ENCODE measurements at regions of chr11 and their contacts with region 1.

Region 1: DNA sequence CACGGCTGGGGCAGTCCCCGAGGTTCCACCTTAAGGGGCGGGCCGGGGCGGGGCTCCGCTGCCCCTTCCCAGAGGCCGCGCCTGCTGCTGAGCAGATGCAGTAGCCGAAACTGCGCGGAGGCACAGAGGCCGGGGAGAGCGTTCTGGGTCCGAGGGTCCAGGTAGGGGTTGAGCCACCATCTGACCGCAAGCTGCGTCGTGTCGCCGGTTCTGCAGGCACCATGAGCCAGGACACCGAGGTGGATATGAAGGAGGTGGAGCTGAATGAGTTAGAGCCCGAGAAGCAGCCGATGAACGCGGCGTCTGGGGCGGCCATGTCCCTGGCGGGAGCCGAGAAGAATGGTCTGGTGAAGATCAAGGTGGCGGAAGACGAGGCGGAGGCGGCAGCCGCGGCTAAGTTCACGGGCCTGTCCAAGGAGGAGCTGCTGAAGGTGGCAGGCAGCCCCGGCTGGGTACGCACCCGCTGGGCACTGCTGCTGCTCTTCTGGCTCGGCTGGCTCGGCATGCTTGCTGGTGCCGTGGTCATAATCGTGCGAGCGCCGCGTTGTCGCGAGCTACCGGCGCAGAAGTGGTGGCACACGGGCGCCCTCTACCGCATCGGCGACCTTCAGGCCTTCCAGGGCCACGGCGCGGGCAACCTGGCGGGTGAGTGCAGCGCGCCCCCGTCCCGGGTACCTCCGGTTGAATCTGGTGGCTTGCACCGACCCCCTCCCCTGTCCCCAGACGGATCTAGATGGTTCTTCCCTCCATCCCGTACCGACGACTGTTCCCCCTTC is at the start of gene SLC3A2:
- DNase-seq: peak; percentile 92
- H3K4me3 Mint-ChIP-seq: peak within 1 kb of the TSS; percentile 99
- H3K27ac Mint-ChIP-seq: peak within 1 kb of the TSS; percentile 100
- H3K4me1 Mint-ChIP-seq: peaks cover 46% of the 10 kb centered on the region
- H3K27me3 Mint-ChIP-seq: no peaks in the 10 kb centered on the region
- total RNA-seq, gene SLC3A2: 309 to 314 TPM

Region 2: GRCh38 chr11:62621567-62622470 is 259.2 kb before region 1 on chr11 and contains the start of gene B3GAT3:
- CTCF ChIA-PET with region 1: no interaction called
- POLR2A ChIA-PET with region 1: no interaction called
- intact Hi-C with region 1: loop called (anchors 2 kb)
- DNase-seq: peak; percentile 98
- H3K4me3 Mint-ChIP-seq: peak within 1 kb of the TSS; percentile 97
- H3K27ac Mint-ChIP-seq: peak within 1 kb of the TSS; percentile 96
- H3K4me1 Mint-ChIP-seq: peaks cover 22% of the 10 kb centered on the region
- H3K27me3 Mint-ChIP-seq: no peaks in the 10 kb centered on the region
- total RNA-seq, gene B3GAT3: 67.0 to 70.4 TPM

Region 3: DNA sequence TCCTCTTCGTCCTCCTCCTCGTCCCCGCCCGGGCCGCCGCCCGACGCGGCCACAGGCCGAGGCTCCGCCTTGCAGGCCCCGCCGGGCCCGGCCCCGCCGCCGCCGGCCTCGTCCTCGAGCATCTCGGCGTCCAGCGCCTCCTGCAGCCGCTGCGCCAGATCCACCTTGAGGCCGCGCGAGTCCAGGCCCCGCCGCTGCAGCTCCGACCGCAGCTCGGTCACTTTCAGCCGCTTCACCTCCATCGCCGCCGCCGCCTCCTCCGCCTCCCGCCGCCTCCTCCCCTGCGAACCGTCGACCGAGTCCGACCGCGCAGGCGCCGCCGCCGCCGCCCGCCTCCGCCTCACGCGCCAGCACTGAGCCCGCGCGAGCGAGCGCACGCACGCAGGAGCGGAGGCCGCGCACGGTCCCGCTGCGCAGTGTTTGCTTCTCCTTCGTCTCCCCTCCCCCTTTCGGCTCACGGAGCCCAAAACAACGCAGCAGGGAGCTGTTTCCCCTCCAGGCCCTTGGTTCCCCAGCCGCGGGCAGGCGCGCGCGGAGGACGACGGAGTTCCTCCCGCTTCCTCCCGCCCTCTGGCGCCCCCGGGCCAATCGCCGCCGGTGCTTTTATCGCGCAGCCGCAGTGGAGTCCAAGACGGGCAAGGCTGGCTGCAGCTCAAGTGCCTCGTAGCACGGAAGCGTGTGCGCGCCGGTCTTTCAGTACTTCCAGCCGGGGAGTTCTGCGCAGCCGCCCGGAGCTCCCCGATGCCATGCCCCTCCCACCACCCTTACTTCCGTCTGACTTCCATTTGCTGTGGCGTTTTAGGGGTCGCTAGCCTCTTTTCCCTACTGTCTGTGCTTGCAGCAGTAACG is 153.9 kb before region 1 on chr11 and contains the start of gene HNRNPUL2:
- CTCF ChIA-PET with region 1: interaction called, 3 read pairs
- POLR2A ChIA-PET with region 1: interaction called, 13 read pairs
- intact Hi-C with region 1: loop called (anchors 1 kb)
- DNase-seq: peak; percentile 99
- H3K4me3 Mint-ChIP-seq: peak within 1 kb of the TSS; percentile 99
- H3K27ac Mint-ChIP-seq: peak within 1 kb of the TSS; percentile 93
- H3K4me1 Mint-ChIP-seq: peaks cover 44% of the 10 kb centered on the region
- H3K27me3 Mint-ChIP-seq: no peaks in the 10 kb centered on the region
- total RNA-seq, gene HNRNPUL2: 56.0 to 62.3 TPM

Region 4: GRCh38 chr11:62787005-62787759 is 93.8 kb before region 1 on chr11 and contains the start of gene TMEM179B:
- CTCF ChIA-PET with region 1: interaction called, 14 read pairs
- POLR2A ChIA-PET with region 1: interaction called, 18 read pairs
- intact Hi-C with region 1: loop called (anchors 1 kb)
- DNase-seq: peak; percentile 98
- H3K4me3 Mint-ChIP-seq: peak within 1 kb of the TSS; percentile 95
- H3K27ac Mint-ChIP-seq: peak within 1 kb of the TSS; percentile 93
- H3K4me1 Mint-ChIP-seq: peaks cover 39% of the 10 kb centered on the region
- H3K27me3 Mint-ChIP-seq: no peaks in the 10 kb centered on the region
- total RNA-seq, gene TMEM179B: 25.0 to 25.5 TPM

Region 5: GRCh38 chr11:62831520-62832335 is 49.3 kb before region 1 on chr11 and contains the start of gene STX5:
- CTCF ChIA-PET with region 1: interaction called, 5 read pairs
- POLR2A ChIA-PET with region 1: interaction called, 15 read pairs
- intact Hi-C with region 1: no loop called
- DNase-seq: peak; percentile 100
- H3K4me3 Mint-ChIP-seq: peak within 1 kb of the TSS; percentile 84
- H3K27ac Mint-ChIP-seq: peak within 1 kb of the TSS; percentile 93
- H3K4me1 Mint-ChIP-seq: peaks cover 42% of the 10 kb centered on the region
- H3K27me3 Mint-ChIP-seq: no peaks in the 10 kb centered on the region
- total RNA-seq, gene STX5: 24.6 to 29.2 TPM

Region 6: GRCh38 chr11:62860835-62861563 is 20.0 kb before region 1 on chr11:
- CTCF ChIA-PET with region 1: interaction called, 31 read pairs
- POLR2A ChIA-PET with region 1: interaction called, 234 read pairs
- intact Hi-C with region 1: loop called (anchors 2 kb)
- DNase-seq: peak; percentile 14
- H3K4me3 Mint-ChIP-seq: no peak overlapping the region
- H3K27ac Mint-ChIP-seq: no peak overlapping the region
- H3K4me1 Mint-ChIP-seq: peaks cover 43% of the 10 kb centered on the region
- H3K27me3 Mint-ChIP-seq: no peaks in the 10 kb centered on the region

Measured in activated CD4-positive, alpha-beta memory T cell treated with anti-CD3 and anti-CD28 coated beads for 36 hours (primary cell).